ENCODE measurements at regions of chr9 and their contacts with region 1.

Region 1: GRCh38 chr9:133803028-133803585 is 65.0 kb upstream of the SARDH start:
- DNase-seq: no peak
- H3K4me3 ChIP-seq: no peak overlapping the region
- CTCF ChIP-seq: no peak

Region 2: GRCh38 chr9:133609311-133610098 is 193.6 kb before region 1 on chr9 and contains the start of gene FAM163B:
- CTCF ChIA-PET with region 1: no interaction called
- POLR2A ChIA-PET with region 1: no interaction called
- DNase-seq: no peak
- H3K4me3 ChIP-seq: no peak within 1 kb of the TSS
- CTCF ChIP-seq: no peak

Region 3: DNA sequence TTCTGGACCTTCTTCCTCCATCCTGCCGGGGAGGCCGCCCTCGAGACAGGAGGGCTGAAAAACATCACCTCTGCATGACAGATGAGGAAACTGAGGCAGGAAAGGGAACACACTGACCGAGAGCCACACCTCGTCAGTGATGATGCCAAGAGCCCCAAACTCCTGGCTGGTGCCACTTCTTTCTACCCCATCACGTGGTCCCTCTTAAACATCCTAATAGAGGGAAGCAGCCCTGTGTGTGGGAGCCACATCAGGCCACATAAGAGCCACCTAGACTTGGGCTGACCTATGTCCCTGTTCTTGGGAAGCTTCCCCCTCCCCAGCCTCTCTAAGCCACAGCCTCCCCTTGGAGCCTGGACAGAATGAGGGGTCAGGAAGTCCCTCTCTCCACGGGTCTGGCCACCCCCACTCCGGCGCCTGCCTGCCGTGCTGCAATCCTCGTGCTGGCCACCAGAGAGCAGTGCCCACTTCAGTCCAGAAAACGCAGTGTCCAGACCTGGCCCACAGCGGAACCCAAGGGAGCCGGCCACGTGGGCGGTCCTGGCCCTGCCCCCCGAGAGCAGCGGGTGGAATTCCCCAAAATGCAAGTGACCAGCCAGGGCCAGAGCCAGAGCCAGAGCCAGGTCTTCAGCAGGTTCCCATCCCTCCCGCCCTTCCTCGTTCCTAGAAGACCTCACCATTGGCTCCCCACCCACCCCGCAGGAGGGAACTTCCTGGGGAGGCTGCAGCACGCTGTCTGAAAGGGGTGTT is 10.2 kb before region 1 on chr9:
- CTCF ChIA-PET with region 1: interaction called, 22 read pairs
- POLR2A ChIA-PET with region 1: interaction called, 3 read pairs
- DNase-seq: peak; percentile 5
- H3K4me3 ChIP-seq: peak overlapping the region; percentile 8; the same call in 1 of the 2 replicates
- CTCF ChIP-seq: peak; percentile 96

Measured in AG04449 (cell line).